Left cardiac atrium (tissue), 4 donors: ENCODE measurements at regions of chr7 and their contacts with region 1.

Region 1: GRCh38 chr7:74256491-74257408 is 2.6 kb upstream of the RFC2 start:
- DNase-seq: peak; percentile 45
- ATAC-seq: no peak

Region 2: DNA sequence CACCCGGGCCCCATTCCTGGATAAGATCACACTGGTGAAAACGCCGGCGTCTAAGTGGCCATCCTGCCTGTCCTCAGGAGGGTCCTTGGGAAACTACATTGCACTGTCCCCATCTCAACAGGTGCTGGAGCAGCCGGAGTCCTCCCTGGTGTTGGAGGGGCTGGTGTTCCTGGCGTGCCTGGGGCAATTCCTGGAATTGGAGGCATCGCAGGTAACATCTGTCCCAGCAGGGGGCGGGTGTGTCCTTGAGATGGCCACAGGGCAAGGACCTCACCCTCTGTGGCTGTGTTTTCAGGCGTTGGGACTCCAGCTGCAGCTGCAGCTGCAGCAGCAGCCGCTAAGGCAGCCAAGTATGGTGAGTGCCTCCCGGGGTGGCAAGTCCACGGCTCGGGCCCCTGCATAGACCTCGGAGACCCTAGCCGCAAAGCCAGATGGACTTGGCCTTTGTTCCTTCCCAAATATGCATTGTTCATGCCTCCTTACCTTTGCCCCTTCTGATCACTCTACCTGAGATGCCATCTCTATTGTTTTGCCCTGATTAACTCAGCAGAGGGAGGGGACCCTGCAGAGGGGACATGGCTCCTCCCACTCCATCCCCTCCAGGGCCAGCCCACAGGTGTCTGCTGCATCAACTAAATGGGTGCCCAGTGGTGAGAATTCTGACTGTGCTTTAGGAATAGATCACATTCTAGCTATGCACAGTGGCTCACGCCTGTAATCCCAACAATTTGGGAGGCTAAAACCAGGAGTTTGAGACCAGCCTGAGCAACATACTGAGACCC is 204.9 kb before region 1 on chr7:
- intact Hi-C with region 1: no loop called
- DNase-seq: peak; percentile 25
- ATAC-seq: peak in 1 of 2 donors; percentile 4

Region 3: GRCh38 chr7:74231232-74231590 is 25.5 kb before region 1 on chr7:
- intact Hi-C with region 1: no loop called
- DNase-seq: no peak
- ATAC-seq: no peak

Region 4: GRCh38 chr7:74289659-74290514 is 33.1 kb after region 1 on chr7:
- intact Hi-C with region 1: loop called in 1 of 2 experiments (anchors 5 kb)
- DNase-seq: peak; percentile 61
- ATAC-seq: peak; percentile 28 to 32